ENCODE measurements at regions of chr10 and their contacts with region 1.

Region 1: GRCh38 chr10:18238870-18239485 is 98.8 kb downstream of the CACNB2 start:
- H3K4me3 ChIP-seq: no peak overlapping the region
- H3K27ac ChIP-seq: no peak overlapping the region
- H3K4me1 ChIP-seq: no peaks in the 10 kb centered on the region
- CTCF ChIP-seq: 0 out of 2 replicates have a peak, but pooled peaks have one; percentile 9

Region 2: GRCh38 chr10:17847585-17848296 is 391.2 kb before region 1 on chr10:
- CTCF ChIA-PET with region 1: interaction called, 16 read pairs
- POLR2A ChIA-PET with region 1: no interaction called
- H3K4me3 ChIP-seq: no peak overlapping the region
- H3K27ac ChIP-seq: no peak overlapping the region
- H3K4me1 ChIP-seq: no peaks in the 10 kb centered on the region
- CTCF ChIP-seq: no peak

Region 3: GRCh38 chr10:18216483-18216882 is 22.5 kb before region 1 on chr10:
- CTCF ChIA-PET with region 1: interaction called, 10 read pairs
- POLR2A ChIA-PET with region 1: no interaction called
- H3K4me3 ChIP-seq: no peak overlapping the region
- H3K27ac ChIP-seq: no peak overlapping the region
- H3K4me1 ChIP-seq: no peaks in the 10 kb centered on the region
- CTCF ChIP-seq: no peak

Region 4: DNA sequence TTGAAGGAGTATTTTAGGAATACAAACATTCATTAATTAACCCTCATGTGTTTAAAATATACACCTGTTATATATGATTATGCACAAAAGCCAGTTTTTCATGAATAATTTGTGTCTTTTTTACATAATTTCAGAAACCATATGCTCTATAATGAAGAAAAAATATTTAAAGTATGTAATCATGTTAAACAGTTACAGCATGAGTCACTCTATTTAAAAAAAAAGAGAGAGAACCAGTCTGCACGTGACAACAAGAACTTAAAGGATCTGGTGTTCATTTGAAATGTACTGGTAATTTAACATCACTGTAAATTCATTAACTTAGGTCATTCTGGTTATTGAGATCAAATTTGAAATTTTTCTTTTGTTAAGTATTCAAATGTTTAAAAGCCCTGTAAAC is 129.7 kb after region 1 on chr10:
- CTCF ChIA-PET with region 1: no interaction called
- POLR2A ChIA-PET with region 1: no interaction called
- H3K4me3 ChIP-seq: no peak overlapping the region
- H3K27ac ChIP-seq: no peak overlapping the region
- H3K4me1 ChIP-seq: no peaks in the 10 kb centered on the region
- CTCF ChIP-seq: no peak